Dorsolateral prefrontal cortex (tissue), 120 donors: ENCODE measurements at regions of chr2 and their contacts with region 1.

Region 1: DNA sequence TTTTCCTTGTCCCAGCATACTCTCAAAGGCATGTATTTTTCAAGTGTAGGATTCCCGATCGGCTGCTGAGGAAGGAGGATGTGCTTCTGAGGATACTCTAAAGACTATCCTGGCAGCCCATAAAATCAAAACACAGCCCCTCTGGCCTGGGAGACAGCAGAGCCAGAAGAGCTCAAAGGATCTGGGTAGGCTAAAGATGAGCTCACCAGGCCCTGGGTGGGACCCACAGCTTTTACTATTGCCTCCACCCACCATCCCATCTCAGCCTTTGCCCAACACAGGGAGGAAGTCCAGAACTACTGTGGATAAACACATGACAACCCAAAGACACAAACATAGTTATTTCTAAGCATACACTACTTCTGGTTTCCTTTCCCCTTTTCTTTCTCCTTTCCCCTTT is 79.1 kb upstream of the ZFP36L2 start:
- DNase-seq: no peak
- H3K4me3 ChIP-seq: no peak overlapping the region
- H3K27ac ChIP-seq: peak overlapping the region in 20 of 59 donors; percentile 3 to 75 (median 31)
- H3K27me3 ChIP-seq: no peaks in the 10 kb centered on the region
- CTCF ChIP-seq: no peak

Region 2: DNA sequence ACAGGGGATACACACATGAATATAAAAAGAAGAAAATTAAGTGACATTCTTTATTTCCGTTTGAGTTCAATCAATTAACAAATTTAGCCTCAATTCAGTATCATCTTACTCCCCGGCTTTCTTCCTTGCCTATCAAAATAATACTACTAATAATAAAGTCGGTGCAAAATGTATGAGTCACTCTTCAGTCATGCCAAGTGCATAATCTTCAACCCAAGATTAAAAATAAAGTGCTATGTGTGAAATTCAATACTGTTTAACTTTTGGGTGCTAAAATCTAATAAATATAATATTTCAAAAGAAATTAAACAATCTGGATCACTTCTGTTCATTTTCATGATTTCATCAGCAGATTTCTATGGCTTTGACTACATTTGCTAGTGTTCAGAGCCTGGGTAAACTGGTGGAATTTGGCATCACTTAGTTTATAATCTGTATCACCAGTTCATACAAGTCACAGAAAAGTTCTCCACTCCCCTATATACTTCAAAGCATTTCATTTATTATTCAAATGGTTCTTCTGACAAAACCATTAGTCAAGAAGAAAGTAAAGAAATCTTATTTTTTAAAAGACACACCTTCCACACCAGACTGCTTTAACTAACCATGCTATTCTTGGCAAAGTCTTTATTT is 106.7 kb after region 1 on chr2:
- intact Hi-C with region 1: no loop called
- DNase-seq: no peak
- H3K4me3 ChIP-seq: no peak overlapping the region
- H3K27ac ChIP-seq: no peak overlapping the region
- H3K27me3 ChIP-seq: no peaks in the 10 kb centered on the region
- CTCF ChIP-seq: no peak

Region 3: DNA sequence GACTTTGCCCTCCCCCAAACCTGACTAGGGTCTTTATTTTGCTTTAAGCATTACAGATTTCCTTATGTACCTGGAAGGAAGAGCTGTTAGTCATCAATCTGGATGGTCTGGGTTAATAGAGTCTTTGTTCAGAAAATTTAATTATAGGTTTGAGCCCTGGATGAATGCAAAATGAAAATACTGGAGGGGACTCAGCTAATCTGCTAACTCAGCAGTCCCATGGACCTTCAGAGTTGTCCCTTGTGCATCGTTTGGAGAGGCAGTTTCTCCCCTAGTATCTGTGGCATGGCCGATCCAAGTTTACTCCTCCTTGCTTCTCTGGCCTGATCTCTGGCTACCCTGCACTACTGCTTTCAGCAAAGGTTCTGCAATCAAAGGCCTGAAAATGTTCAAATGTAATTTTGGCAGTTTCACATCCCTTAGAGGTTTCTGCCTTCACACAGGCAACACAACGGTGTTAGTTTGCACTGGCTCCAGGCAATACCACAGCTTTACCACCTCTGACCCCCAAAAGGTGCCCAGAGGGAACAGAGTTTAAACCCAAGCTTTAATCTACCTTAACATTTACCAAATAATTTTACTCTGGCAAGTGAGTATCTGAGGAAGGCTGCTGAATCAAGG is 156.0 kb after region 1 on chr2:
- intact Hi-C with region 1: loop called in 1 of 2 experiments (anchors 10 kb)
- DNase-seq: no peak
- H3K4me3 ChIP-seq: no peak overlapping the region
- H3K27ac ChIP-seq: peak overlapping the region in 11 of 59 donors; percentile 2 to 57 (median 20)
- H3K27me3 ChIP-seq: no peaks in the 10 kb centered on the region
- CTCF ChIP-seq: no peak